ENCODE measurements at regions of chr7 and their contacts with region 1.

Region 1: DNA sequence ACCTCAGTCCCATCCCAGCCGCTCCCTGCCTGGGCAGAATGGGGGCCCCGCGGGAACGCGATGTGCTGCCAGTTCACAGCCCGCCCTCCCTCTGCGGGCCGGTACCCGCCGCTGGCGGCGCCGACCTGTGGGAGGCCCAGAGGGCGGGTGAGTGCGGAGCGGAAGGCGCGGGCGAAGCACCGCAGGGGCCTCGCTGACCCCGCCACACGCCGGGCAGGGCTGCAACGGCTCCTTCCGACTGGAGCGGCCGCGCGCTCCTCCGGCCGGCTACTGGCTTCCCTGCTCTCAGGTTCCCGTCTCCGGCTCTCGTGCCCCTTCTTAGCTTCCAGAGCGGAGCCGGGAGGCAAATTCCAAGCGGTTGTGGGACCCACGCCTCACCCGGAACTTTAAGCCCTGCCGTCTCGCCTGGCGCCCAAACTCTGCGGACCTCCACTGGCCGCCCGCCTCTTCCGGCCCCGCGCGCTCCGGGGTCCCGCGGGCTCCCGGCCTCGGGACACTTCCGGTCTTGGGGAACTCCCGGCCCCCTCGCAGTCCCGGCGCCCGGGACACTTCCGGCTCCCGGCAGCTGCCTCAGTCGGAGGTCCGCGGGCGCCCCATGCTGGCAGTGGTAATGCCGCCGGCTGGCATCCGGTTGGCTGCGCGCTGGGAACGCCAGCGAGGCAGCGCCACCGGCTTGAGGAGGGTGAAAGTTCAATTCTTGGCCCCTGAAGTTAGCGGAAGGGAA is at the start of gene CYREN:
- DNase-seq: peak; percentile 97 to 98 (median 98)
- ATAC-seq: peak; percentile 95
- H3K4me3 ChIP-seq: peak within 1 kb of the TSS; percentile 83
- H3K27ac ChIP-seq: peak within 1 kb of the TSS; percentile 95
- H3K4me1 ChIP-seq: peaks cover 15 to 30% of the 10 kb centered on the region in 2 experiments; a peak in 4 of 5 replicates
- H3K27me3 ChIP-seq: no peaks in the 10 kb centered on the region
- CTCF ChIP-seq: peak; percentile 92 to 99 (median 98)
- EP300 ChIP-seq: peak; percentile 49; the same call in 1 of the 2 replicates
- POLR2A ChIP-seq: peak; percentile 98
- RAD21 ChIP-seq: peak; percentile 98 to 99
- polyA plus RNA-seq, gene CYREN: 13.9 to 25.5 TPM

Region 2: GRCh38 chr7:134646425-134647305 is 523.8 kb before region 1 on chr7 and contains the start of gene BPGM:
- CTCF ChIA-PET with region 1: no interaction called
- POLR2A ChIA-PET with region 1: interaction called, 3 read pairs
- in situ Hi-C with region 1: no loop called
- intact Hi-C with region 1: loop called (anchors 5 kb)
- DNase-seq: peak; percentile 99 to 100 (median 100)
- ATAC-seq: peak; percentile 99
- H3K4me3 ChIP-seq: peak within 1 kb of the TSS; percentile 62
- H3K27ac ChIP-seq: peak within 1 kb of the TSS; percentile 58
- H3K4me1 ChIP-seq: peaks cover 0 to 4% of the 10 kb centered on the region in 2 experiments; a peak in 2 of 5 replicates
- H3K27me3 ChIP-seq: no peaks in the 10 kb centered on the region
- CTCF ChIP-seq: peak; percentile 63 to 71 (median 66)
- EP300 ChIP-seq: no peak; the same call in none of the 2 replicates
- POLR2A ChIP-seq: peak; percentile 97
- RAD21 ChIP-seq: no peak
- polyA plus RNA-seq, gene BPGM: 33.0 to 46.1 TPM

Region 3: DNA sequence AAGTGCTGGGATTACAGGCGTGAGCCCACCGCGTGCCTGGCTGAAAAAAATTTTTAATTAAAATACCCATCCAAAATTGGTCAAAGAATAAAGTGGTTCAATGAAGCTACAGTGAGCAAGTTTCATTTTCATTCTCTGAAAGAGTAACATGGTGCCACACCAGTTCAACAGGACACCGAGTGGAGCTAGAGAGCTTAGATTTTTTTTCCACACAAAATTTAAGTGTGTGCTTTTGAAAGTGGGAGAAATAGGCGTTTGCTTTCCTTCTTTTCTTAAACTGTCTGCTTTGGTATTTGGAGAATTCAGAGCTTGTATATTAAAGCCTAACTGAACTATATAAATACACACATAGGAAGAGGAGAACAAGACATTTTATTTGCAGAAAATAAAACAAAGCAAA is 480.4 kb before region 1 on chr7:
- CTCF ChIA-PET with region 1: no interaction called
- POLR2A ChIA-PET with region 1: no interaction called
- in situ Hi-C with region 1: no loop called
- intact Hi-C with region 1: loop called (anchors 5 kb)
- DNase-seq: no peak
- ATAC-seq: peak; percentile 59
- H3K4me3 ChIP-seq: no peak overlapping the region
- H3K27ac ChIP-seq: no peak overlapping the region
- H3K4me1 ChIP-seq: no peaks in the 10 kb centered on the region
- H3K27me3 ChIP-seq: peaks cover 40 to 45% of the 10 kb centered on the region in 2 experiments
- CTCF ChIP-seq: peak; percentile 10 to 42 (median 31); a peak in 3 of 6 replicates
- EP300 ChIP-seq: no peak
- POLR2A ChIP-seq: no peak
- RAD21 ChIP-seq: peak; percentile 46 to 54

Region 4: DNA sequence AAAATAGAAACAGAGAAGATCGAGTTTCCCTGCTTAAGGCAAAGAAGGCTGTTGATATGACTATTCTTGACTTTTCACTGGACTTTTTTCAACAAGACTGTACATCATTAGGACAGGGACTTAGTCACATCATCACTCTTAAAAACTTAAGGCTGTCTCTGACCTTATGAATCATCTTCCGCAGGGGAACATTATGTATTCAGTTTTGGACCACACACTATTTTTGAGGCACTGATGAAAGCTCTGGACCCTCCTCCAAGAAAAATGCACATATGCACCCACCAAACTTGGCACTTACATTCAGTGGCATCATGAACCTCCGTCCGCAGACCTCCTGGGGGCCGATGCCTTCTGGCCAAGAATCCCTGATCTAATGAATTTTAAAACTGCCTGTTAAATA is 294.6 kb before region 1 on chr7:
- CTCF ChIA-PET with region 1: interaction called, 5 read pairs
- POLR2A ChIA-PET with region 1: no interaction called
- in situ Hi-C with region 1: no loop called
- intact Hi-C with region 1: loop called (anchors 10 kb)
- DNase-seq: no peak
- ATAC-seq: no peak
- H3K4me3 ChIP-seq: no peak overlapping the region
- H3K27ac ChIP-seq: no peak overlapping the region
- H3K4me1 ChIP-seq: no peaks in the 10 kb centered on the region
- H3K27me3 ChIP-seq: peaks cover 13 to 23% of the 10 kb centered on the region in 2 experiments; a peak in 4 of 5 replicates
- CTCF ChIP-seq: no peak
- EP300 ChIP-seq: no peak
- POLR2A ChIP-seq: no peak
- RAD21 ChIP-seq: no peak

Region 5: GRCh38 chr7:134954197-134955082 is 216.0 kb before region 1 on chr7:
- CTCF ChIA-PET with region 1: no interaction called
- POLR2A ChIA-PET with region 1: interaction called, 4 read pairs
- in situ Hi-C with region 1: no loop called
- intact Hi-C with region 1: loop called (anchors 1 kb)
- DNase-seq: peak; percentile 35 to 50 (median 44)
- ATAC-seq: peak; percentile 80
- H3K4me3 ChIP-seq: no peak overlapping the region
- H3K27ac ChIP-seq: no peak overlapping the region
- H3K4me1 ChIP-seq: no peaks in the 10 kb centered on the region
- H3K27me3 ChIP-seq: peaks cover 0 to 15% of the 10 kb centered on the region in 2 experiments; a peak in 2 of 5 replicates
- CTCF ChIP-seq: peak; percentile 50 to 82 (median 64); a peak in 4 of 6 replicates
- EP300 ChIP-seq: no peak
- POLR2A ChIP-seq: no peak
- RAD21 ChIP-seq: peak; percentile 83 to 88

Region 6: DNA sequence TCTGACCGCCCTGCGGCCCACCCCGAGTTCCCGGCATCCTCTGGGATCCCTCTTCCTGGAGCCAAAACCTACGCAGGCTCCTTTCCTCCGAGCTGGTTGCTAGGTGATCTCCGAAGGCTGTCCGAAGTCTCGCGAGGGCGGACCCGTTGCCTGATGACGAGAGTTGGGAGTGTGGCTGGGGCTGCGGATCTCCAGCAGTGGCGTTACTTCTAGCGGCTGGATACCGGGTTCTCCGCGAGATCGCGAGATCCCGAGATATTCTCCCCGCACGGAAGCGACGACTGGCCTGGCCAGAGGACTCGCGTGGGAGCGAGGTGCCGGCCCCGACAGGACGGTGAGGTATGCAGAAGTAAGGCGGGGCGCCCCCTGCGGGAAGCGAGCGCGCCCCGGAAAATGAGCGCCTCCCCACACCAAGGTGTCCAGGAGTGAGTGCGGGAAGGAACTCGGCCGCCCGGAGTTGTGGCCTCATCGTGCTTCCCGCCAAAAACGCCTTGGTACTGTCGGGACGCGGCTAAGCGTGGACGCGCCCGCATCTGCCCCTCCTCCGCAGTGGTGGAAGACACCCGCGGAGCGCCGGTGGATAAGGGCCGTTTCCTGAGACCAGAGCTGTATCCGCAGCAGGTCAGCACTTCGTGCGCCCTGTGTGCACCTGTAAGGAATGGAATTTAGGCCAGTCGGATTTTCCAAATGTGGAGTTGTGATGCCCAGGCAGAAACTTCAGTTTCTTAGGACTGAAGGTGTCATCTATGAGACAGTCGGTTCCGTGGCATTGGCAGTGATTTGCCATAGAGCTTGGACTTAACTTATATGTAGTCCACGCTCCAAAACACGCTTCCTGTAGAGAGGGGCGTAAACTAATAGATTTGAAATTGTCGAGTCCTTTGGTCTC is 183.8 kb before region 1 on chr7 and contains the start of gene AGBL3:
- CTCF ChIA-PET with region 1: interaction called, 4 read pairs
- POLR2A ChIA-PET with region 1: interaction called, 3 read pairs
- in situ Hi-C with region 1: no loop called
- intact Hi-C with region 1: loop called (anchors 1 kb)
- DNase-seq: peak; percentile 94 to 98 (median 96)
- ATAC-seq: peak; percentile 98
- H3K4me3 ChIP-seq: peak within 1 kb of the TSS; percentile 69
- H3K27ac ChIP-seq: peak within 1 kb of the TSS; percentile 78
- H3K4me1 ChIP-seq: peaks cover 9 to 10% of the 10 kb centered on the region in 2 experiments; a peak in 4 of 5 replicates
- H3K27me3 ChIP-seq: no peaks in the 10 kb centered on the region
- CTCF ChIP-seq: peak; percentile 81 to 91 (median 90)
- EP300 ChIP-seq: no peak; the same call in 1 of the 2 replicates
- POLR2A ChIP-seq: peak; percentile 93
- RAD21 ChIP-seq: peak; percentile 53 to 60
- polyA plus RNA-seq, gene AGBL3: 0.71 to 0.75 TPM

Region 7: GRCh38 chr7:135160098-135160857 is 10.2 kb before region 1 on chr7:
- CTCF ChIA-PET with region 1: no interaction called
- POLR2A ChIA-PET with region 1: interaction called, 11 read pairs
- in situ Hi-C with region 1: no loop called
- intact Hi-C with region 1: no loop called
- DNase-seq: peak; percentile 44 to 90 (median 60)
- ATAC-seq: peak; percentile 76
- H3K4me3 ChIP-seq: no peak overlapping the region
- H3K27ac ChIP-seq: peak overlapping the region; percentile 77
- H3K4me1 ChIP-seq: peaks cover 8 to 27% of the 10 kb centered on the region in 2 experiments
- H3K27me3 ChIP-seq: no peaks in the 10 kb centered on the region
- CTCF ChIP-seq: no peak
- EP300 ChIP-seq: peak; percentile 93
- POLR2A ChIP-seq: no peak
- RAD21 ChIP-seq: no peak

Region 8: DNA sequence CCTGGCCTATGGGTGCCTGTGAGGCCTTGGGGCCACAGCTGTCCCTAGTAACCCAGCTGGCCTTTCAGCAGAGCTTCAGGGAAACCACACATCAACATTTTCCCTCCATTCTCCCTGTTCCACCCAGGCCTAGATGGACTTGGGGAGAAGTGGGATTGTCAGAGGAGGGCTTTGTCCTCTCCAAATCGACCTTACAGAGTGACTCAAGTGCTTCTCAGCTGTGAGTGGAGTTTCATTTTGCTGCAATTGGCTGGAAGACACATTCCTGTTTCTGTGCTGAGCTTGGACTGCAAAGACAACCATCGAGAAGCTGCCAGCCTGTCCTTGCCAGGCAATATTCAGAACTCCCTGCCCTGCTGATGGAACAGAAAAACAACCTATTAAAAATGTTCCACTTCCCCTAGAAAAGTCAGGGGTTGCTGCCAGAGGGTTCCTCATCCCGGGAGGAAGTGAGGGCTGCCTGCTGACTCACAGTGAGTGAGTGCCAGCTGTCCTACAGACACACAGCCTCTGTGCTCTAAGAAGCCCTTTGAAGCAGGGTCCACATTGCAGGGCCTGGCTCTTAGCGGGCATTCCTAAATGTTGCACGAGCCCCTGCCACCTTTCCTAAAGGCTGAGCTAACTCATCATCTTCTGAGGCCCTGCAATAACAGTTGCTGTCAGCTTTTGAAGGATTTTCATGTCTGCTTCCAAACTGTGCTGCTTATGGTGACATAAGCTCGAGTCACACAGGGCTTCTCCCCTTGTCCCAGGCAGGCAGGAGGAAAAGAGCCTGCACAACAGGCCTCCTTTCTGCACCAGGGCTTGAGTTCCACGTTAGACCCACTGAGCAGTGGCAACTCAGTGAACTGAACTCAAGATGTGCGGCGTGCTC is 83.7 kb after region 1 on chr7:
- CTCF ChIA-PET with region 1: no interaction called
- POLR2A ChIA-PET with region 1: no interaction called
- in situ Hi-C with region 1: no loop called
- intact Hi-C with region 1: no loop called
- DNase-seq: no peak
- ATAC-seq: peak; percentile 33; the same call in 2 of the 3 replicates
- H3K4me3 ChIP-seq: no peak overlapping the region
- H3K27ac ChIP-seq: no peak overlapping the region
- H3K4me1 ChIP-seq: no peaks in the 10 kb centered on the region
- H3K27me3 ChIP-seq: peaks cover 33 to 73% of the 10 kb centered on the region in 2 experiments; a peak in 4 of 5 replicates
- CTCF ChIP-seq: no peak
- EP300 ChIP-seq: no peak
- POLR2A ChIP-seq: no peak
- RAD21 ChIP-seq: no peak

Region 9: GRCh38 chr7:135728136-135728669 is 557.8 kb after region 1 on chr7 and contains the start of gene SLC13A4:
- CTCF ChIA-PET with region 1: no interaction called
- POLR2A ChIA-PET with region 1: no interaction called
- in situ Hi-C with region 1: no loop called
- intact Hi-C with region 1: no loop called
- DNase-seq: peak; percentile 88 to 96 (median 95)
- ATAC-seq: peak; percentile 98
- H3K4me3 ChIP-seq: no peak within 1 kb of the TSS; the same call in 1 of the 2 replicates
- H3K27ac ChIP-seq: no peak within 1 kb of the TSS
- H3K4me1 ChIP-seq: peaks cover 8 to 22% of the 10 kb centered on the region in 2 experiments
- H3K27me3 ChIP-seq: peaks cover 22 to 23% of the 10 kb centered on the region in 2 experiments
- CTCF ChIP-seq: no peak
- EP300 ChIP-seq: no peak
- POLR2A ChIP-seq: no peak
- RAD21 ChIP-seq: no peak
- polyA plus RNA-seq, gene SLC13A4: 0.27 to 0.48 TPM